OCI-LY7 (cell line): ENCODE measurements at regions of chr19 and their contacts with region 1.

Region 1: DNA sequence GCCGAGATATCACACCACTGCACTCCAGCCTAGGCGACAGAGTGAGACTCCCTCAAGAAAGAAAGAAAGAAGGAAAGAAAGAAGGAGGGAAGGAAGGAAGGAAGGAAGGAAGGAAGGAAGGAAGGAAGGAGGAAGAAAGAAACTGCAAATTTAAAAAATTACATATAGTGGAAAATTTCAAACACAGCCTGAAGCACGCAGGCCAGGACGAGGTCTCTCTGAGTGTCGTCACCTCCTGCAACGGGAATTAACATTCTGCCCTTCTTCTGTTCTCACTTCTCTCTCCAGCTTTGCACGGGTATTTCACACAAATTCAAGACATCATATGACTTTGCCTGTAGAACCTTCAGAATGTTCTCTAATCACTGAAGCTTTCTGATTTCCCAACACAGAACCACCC is 108.2 kb downstream of the GNG7 start:
- DNase-seq: no peak
- H3K4me3 ChIP-seq: no peak overlapping the region
- H3K27ac ChIP-seq: no peak overlapping the region
- H3K4me1 ChIP-seq: peaks cover 8% of the 10 kb centered on the region
- CTCF ChIP-seq: no peak

Region 2: DNA sequence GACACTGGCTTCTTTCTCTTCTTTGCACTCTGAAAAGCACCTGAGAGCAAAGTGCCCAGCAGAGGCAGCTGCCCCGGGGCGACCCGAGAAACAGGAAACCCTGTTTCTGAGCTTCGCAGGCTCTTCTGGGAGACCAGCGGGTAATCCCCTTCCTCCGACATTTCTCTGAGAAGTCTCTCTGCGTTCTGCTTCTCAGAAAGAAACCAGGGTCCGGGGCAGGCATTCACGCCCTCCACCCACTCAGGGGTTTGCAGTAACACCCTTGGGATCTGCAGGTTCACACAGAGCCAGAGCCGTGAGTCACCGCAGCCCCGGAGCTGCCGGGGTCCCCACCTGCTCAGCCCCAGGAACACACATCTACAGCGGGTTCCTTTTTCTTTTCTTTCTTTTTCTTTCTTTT is 32.4 kb before region 1 on chr19:
- CTCF ChIA-PET with region 1: no interaction called
- POLR2A ChIA-PET with region 1: interaction called, 10 read pairs
- intact Hi-C with region 1: no loop called
- DNase-seq: peak; percentile 82
- H3K4me3 ChIP-seq: peak overlapping the region; percentile 61
- H3K27ac ChIP-seq: peak overlapping the region; percentile 47
- H3K4me1 ChIP-seq: peaks cover 25% of the 10 kb centered on the region
- CTCF ChIP-seq: no peak

Region 3: GRCh38 chr19:2653710-2654707 is 59.7 kb after region 1 on chr19:
- CTCF ChIA-PET with region 1: no interaction called
- POLR2A ChIA-PET with region 1: no interaction called
- intact Hi-C with region 1: no loop called
- DNase-seq: no peak
- H3K4me3 ChIP-seq: no peak overlapping the region
- H3K27ac ChIP-seq: no peak overlapping the region
- H3K4me1 ChIP-seq: peaks cover 12% of the 10 kb centered on the region
- CTCF ChIP-seq: no peak